PC-9 (cell line): ENCODE measurements at regions of chr11 and their contacts with region 1.

Region 1: DNA sequence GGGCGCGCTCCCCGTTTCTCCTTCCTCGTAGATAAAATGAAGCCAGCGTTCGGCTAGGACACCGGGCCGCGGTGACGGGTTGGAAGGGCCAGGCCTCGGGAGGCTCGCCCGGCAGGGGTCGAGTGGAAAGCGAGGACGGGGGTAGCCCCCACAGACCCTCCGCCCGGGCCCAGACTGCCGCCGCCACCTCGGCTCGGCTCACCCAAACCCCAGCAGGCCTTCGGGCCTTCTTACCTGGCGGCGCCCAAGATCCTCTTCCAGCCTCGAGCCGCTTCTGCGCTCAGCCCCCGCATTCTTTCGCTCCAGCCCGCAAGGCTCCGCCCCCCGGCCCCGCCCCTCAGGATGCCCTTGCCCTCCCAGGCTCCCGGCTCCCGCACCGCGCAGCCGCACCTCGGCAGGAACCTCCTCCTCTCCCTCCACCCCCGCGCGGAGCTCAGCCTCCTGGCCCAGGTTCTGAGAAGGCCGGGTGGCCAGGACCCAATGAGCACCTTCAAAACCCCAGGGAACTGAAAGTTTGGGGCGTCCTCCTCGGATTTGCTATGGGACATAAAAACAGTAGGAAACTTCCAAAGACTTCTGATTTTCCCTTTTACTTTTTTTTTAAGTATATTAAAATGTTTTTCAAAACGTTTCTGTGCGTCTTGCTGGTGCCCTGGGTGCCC is at the start of gene CD59:
- DNase-seq: peak; percentile 80 to 98
- H3K4me3 ChIP-seq: peak within 1 kb of the TSS; percentile 69
- H3K27ac ChIP-seq: peak within 1 kb of the TSS; percentile 89
- H3K4me1 ChIP-seq: peaks cover 48% of the 10 kb centered on the region
- H3K27me3 ChIP-seq: no peaks in the 10 kb centered on the region
- CTCF ChIP-seq: no peak
- total RNA-seq, gene CD59: 288 and 291 TPM in 2 replicates

Region 2: GRCh38 chr11:33257897-33258630 is 478.2 kb before region 1 on chr11:
- CTCF ChIA-PET with region 1: no interaction called
- POLR2A ChIA-PET with region 1: no interaction called
- intact Hi-C with region 1: loop called (anchors 10 kb)
- DNase-seq: peak; percentile 68 to 85
- H3K4me3 ChIP-seq: peak overlapping the region; percentile 64
- H3K27ac ChIP-seq: peak overlapping the region; percentile 90
- H3K4me1 ChIP-seq: peaks cover 35% of the 10 kb centered on the region
- H3K27me3 ChIP-seq: no peaks in the 10 kb centered on the region
- CTCF ChIP-seq: peak; percentile 22; the same call in 1 of the 2 replicates

Region 3: GRCh38 chr11:33310720-33311500 is 425.4 kb before region 1 on chr11:
- CTCF ChIA-PET with region 1: no interaction called
- POLR2A ChIA-PET with region 1: no interaction called
- intact Hi-C with region 1: no loop called
- DNase-seq: peak in 1 of 2 experiments; percentile 8
- H3K4me3 ChIP-seq: no peak overlapping the region
- H3K27ac ChIP-seq: no peak overlapping the region
- H3K4me1 ChIP-seq: no peaks in the 10 kb centered on the region
- H3K27me3 ChIP-seq: no peaks in the 10 kb centered on the region
- CTCF ChIP-seq: no peak

Region 4: DNA sequence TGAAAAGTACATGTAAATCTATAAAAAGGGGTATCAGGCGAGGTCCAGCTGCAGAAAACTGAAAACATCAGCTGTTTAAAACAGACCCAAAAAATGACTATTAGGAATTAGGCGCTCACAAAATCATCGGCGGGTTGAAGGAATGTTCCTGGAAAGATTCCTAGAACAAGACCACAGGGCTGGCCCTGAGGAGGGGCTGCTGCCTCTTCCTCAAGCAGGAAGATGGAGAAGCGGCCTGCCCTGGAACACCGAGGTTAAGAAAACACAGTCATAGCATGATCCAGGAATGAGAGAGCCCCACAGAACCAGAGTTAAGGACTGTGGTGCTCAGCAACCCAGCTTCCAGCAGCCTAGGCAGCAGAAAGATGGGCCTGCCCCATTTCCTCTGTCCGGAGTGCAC is 114.1 kb before region 1 on chr11:
- CTCF ChIA-PET with region 1: no interaction called
- POLR2A ChIA-PET with region 1: interaction called, 12 read pairs
- intact Hi-C with region 1: no loop called
- DNase-seq: no peak
- H3K4me3 ChIP-seq: no peak overlapping the region
- H3K27ac ChIP-seq: no peak overlapping the region
- H3K4me1 ChIP-seq: no peaks in the 10 kb centered on the region
- H3K27me3 ChIP-seq: no peaks in the 10 kb centered on the region
- CTCF ChIP-seq: no peak

Region 5: GRCh38 chr11:33670250-33671011 is 65.8 kb before region 1 on chr11:
- CTCF ChIA-PET with region 1: no interaction called
- POLR2A ChIA-PET with region 1: interaction called, 15 read pairs
- intact Hi-C with region 1: no loop called
- DNase-seq: no peak
- H3K4me3 ChIP-seq: no peak overlapping the region
- H3K27ac ChIP-seq: no peak overlapping the region
- H3K4me1 ChIP-seq: peaks cover 11% of the 10 kb centered on the region; the same call in 1 of the 2 replicates
- H3K27me3 ChIP-seq: no peaks in the 10 kb centered on the region
- CTCF ChIP-seq: no peak

Region 6: GRCh38 chr11:33700425-33701271 is 35.6 kb before region 1 on chr11 and contains the start of gene C11orf91:
- CTCF ChIA-PET with region 1: interaction called, 3 read pairs
- POLR2A ChIA-PET with region 1: interaction called, 12 read pairs
- intact Hi-C with region 1: no loop called
- DNase-seq: peak; percentile 73 to 97
- H3K4me3 ChIP-seq: peak within 1 kb of the TSS; percentile 56
- H3K27ac ChIP-seq: peak within 1 kb of the TSS; percentile 68
- H3K4me1 ChIP-seq: peaks cover 68% of the 10 kb centered on the region
- H3K27me3 ChIP-seq: no peaks in the 10 kb centered on the region
- CTCF ChIP-seq: no peak
- total RNA-seq, gene C11orf91: 0.90 TPM in 1 of 2 replicates, not detected in the other

Region 7: GRCh38 chr11:33716236-33716635 is 20.0 kb before region 1 on chr11:
- CTCF ChIA-PET with region 1: interaction called, 3 read pairs
- POLR2A ChIA-PET with region 1: interaction called, 19 read pairs
- intact Hi-C with region 1: no loop called
- DNase-seq: peak in 1 of 2 experiments; percentile 69
- H3K4me3 ChIP-seq: no peak overlapping the region
- H3K27ac ChIP-seq: peak overlapping the region; percentile 11; the same call in 1 of the 2 replicates
- H3K4me1 ChIP-seq: peaks cover 11% of the 10 kb centered on the region
- H3K27me3 ChIP-seq: no peaks in the 10 kb centered on the region
- CTCF ChIP-seq: peak; percentile 47

Region 8: GRCh38 chr11:33773987-33774735 is 37.9 kb after region 1 on chr11 and contains the start of gene FBXO3:
- CTCF ChIA-PET with region 1: no interaction called
- POLR2A ChIA-PET with region 1: no interaction called
- intact Hi-C with region 1: loop called (anchors 5 kb)
- DNase-seq: peak; percentile 75 to 92
- H3K4me3 ChIP-seq: peak within 1 kb of the TSS; percentile 96
- H3K27ac ChIP-seq: peak within 1 kb of the TSS; percentile 38
- H3K4me1 ChIP-seq: peaks cover 50% of the 10 kb centered on the region
- H3K27me3 ChIP-seq: no peaks in the 10 kb centered on the region
- CTCF ChIP-seq: no peak
- total RNA-seq, gene FBXO3: 28.3 and 32.9 TPM in 2 replicates